Activated T-helper 2 cell treated with anti-CD3 and anti-CD28 coated beads, Interferon-gamma antibody, Interleukin-2, Interleukin-4, amounts not matched to agents 10 μg/mL and 5 μg/mL and 100 μg/mL, durations not matched to agents 14 hours and 24 hours and 36 hours (primary cell): ENCODE measurements at regions of chr5 and their contacts with region 1.

Region 1: DNA sequence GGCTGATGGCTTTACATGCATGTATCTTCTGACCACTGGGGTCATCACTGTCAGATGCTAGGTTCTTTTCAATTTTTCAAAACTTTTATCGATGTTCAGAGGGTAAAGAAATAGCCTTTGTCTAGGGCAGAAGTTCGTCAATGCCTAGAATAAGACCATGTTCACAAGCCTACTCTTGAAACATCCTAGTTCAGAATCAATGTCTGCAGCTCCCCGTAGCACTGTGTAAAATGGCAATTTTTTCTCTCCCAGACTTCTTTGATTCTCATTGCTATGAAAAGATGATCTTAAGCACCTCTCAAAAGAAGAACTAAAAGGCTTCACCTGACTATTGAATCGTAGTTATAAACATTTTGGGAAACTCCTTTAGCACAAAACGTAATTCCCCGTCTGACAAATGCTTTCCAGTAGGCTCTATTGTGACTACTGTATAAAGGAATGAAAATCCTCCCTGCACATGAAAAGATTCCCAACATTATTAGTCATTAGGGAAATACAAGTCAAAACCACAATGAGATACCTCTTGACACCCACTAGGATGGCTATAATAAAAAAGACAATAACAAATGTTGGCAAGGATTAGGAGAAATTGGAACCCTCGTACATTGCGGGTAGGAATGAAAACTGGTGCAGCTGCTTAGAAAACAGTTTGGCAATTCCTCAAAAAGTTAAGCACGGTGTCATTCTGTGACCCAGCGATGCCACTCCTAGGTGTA is 263.5 kb downstream of the ARHGAP26 start:
- DNase-seq: no peak
- H3K4me3 Mint-ChIP-seq: no peak overlapping the region
- H3K27ac Mint-ChIP-seq: no peak overlapping the region
- H3K4me1 Mint-ChIP-seq: peaks cover 70% of the 10 kb centered on the region
- H3K27me3 Mint-ChIP-seq: no peaks in the 10 kb centered on the region

Region 2: DNA sequence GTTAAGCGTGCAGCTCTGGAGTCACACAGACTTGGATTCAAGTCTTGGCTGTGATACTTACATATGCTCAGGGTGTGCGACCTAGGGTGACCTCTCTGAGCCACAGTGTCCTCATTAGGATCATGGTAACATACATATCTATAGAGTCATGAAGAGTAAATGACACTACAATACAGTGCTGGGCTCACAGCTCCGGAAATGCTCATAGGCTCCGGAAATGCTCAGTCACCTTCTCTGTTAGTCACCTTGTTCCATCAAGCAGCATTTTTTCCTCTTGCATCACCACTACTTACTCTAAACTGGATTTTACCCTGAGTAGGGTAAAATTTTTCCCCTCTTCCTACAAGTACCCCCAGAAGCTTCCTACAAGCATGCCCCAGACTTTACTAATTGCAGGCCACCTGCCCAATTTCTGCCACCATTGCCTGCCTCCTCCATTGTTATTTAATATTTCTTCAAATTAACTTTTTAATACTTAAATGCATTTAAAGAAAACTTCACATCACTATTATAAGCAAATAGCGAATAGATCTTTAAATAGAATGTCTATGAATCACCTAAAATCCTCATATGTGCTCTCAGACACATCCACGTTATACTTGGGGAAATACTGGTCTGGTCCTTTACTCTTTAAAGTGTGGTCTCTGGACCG is 561.3 kb before region 1 on chr5:
- intact Hi-C with region 1: no loop called
- DNase-seq: peak; percentile 11
- H3K4me3 Mint-ChIP-seq: no peak overlapping the region
- H3K27ac Mint-ChIP-seq: peak overlapping the region; percentile 53
- H3K4me1 Mint-ChIP-seq: peaks cover 13% of the 10 kb centered on the region
- H3K27me3 Mint-ChIP-seq: peaks cover 2% of the 10 kb centered on the region

Region 3: GRCh38 chr5:142971303-142972013 is 62.2 kb before region 1 on chr5:
- intact Hi-C with region 1: no loop called
- DNase-seq: no peak
- H3K4me3 Mint-ChIP-seq: no peak overlapping the region
- H3K27ac Mint-ChIP-seq: no peak overlapping the region
- H3K4me1 Mint-ChIP-seq: peaks cover 28% of the 10 kb centered on the region
- H3K27me3 Mint-ChIP-seq: no peaks in the 10 kb centered on the region

Region 4: DNA sequence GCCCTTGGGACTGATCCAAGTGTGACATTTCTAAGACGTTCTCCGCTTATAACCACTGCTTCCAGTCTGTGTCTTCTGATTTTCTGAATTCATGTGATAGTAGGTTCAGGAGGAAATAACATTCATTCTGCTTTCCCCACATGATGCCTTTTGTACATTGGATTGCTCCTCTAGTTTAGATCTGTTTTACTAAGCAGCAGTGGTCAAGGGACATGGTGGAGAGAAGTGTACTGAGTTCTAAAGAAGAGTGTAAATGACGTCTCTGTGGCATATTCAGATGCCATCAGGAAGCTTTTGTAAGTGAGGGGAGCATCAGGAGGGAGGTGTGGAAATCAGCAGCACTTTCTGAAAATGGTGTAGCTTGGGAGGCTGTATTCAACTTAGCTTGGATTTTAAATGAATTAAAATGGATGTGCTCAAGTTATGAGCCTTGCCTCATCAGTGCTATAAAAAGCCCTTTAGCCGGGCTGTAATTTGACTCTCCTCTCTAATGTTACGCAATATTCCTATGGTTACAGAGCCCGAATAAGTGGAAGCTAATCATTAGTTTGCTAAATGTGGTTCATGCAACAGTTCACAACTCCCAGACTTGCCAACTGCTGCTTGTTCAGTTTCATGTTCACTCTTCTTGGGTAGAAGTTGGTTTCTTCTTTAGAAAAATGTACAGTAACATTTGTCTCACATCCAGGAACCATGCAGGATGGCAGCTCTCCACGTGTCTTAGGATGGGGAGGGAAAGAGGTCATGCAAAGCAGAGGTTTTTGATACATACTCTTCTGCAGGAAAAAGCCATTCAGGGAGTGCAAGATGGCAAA is 17.8 kb after region 1 on chr5:
- intact Hi-C with region 1: loop called (anchors 1 kb)
- DNase-seq: no peak
- H3K4me3 Mint-ChIP-seq: no peak overlapping the region
- H3K27ac Mint-ChIP-seq: no peak overlapping the region
- H3K4me1 Mint-ChIP-seq: peaks cover 62% of the 10 kb centered on the region
- H3K27me3 Mint-ChIP-seq: no peaks in the 10 kb centered on the region